ENCODE measurements at regions of chr2 and their contacts with region 1.

Region 1: DNA sequence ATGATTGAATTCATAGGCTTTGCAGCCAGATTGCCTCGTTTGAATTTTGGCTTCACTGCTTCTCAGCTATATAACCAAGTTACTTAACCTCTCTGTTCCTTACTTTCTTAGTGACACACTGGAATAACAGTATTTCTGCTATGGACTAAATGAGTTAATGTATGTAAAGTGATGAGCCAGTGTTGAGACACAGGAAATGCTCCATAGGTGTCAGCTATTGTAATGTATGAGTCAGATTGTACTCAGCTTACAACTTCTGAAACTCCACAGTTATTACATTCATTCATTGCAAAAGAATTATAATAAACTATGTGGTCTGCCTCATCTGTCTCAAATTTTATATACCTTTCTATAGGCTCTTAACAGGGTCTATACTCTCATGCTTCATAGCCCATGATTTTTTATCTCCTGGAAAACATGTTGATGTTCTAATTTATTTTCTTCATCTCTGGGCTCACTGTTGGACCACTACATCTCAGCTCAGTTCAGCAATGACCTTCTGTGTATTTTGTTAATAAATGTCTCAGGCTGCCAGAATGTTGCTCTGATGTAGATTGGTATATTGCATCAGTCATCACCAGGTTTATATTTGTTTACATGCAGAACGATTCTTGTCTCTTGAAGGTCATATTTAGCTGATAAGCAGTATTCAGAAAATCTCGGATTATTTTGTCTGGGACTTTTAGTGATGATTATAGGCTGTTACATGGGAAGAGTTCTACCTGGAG is 76.2 kb downstream of the MAP3K20 start:
- DNase-seq: no peak
- H3K4me3 Mint-ChIP-seq: peak overlapping the region; percentile 53
- H3K27ac Mint-ChIP-seq: peak overlapping the region; percentile 77
- H3K4me1 Mint-ChIP-seq: peaks cover 64% of the 10 kb centered on the region
- H3K27me3 Mint-ChIP-seq: peaks cover 4% of the 10 kb centered on the region

Region 2: GRCh38 chr2:173027181-173028128 is 124.4 kb before region 1 on chr2:
- intact Hi-C with region 1: loop called (anchors 5 kb)
- DNase-seq: peak; percentile 57
- H3K4me3 Mint-ChIP-seq: no peak overlapping the region
- H3K27ac Mint-ChIP-seq: no peak overlapping the region
- H3K4me1 Mint-ChIP-seq: no peaks in the 10 kb centered on the region
- H3K27me3 Mint-ChIP-seq: peaks cover 11% of the 10 kb centered on the region

Region 3: DNA sequence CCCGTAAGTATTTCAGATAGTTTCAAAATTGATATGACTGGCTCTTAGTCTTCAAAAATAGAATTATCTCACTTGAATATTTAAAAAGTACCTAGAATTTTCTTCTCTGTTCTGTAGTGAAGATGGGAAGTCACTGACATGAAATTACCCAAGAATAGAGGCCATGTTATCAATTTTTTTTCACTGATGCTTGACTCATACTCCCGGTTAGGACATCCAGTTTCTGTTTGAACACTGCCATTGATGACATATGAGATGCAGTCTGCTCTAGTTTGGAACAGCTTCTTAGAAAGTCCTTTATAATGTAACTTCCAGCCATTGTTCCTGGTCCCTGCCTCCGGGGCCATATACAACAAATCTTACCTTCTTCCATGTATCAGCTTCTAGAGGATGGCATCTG is 50.1 kb before region 1 on chr2:
- intact Hi-C with region 1: loop called (anchors 1 kb)
- DNase-seq: no peak
- H3K4me3 Mint-ChIP-seq: no peak overlapping the region
- H3K27ac Mint-ChIP-seq: peak overlapping the region; percentile 4
- H3K4me1 Mint-ChIP-seq: peaks cover 31% of the 10 kb centered on the region
- H3K27me3 Mint-ChIP-seq: no peaks in the 10 kb centered on the region

Region 4: DNA sequence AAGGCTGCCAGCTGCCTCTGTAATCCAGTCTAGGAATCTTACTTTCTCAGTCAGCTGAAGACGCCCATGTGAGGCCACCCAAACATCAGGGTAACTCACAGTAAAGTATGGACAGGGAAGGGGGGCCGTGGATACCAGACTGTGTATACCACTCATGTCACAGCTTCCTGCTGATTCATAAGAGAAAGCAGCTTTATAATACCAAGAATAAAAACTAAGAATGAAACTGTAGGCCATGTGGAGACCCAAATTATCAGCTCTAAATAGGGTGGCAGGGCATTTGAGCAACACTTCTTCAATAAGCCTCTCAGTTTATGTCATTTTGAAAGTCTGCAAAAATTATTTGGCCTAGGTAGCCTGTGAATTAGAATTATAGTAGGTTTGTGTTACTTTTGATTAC is 87.8 kb after region 1 on chr2:
- intact Hi-C with region 1: loop called (anchors 2 kb)
- DNase-seq: peak; percentile 6
- H3K4me3 Mint-ChIP-seq: no peak overlapping the region
- H3K27ac Mint-ChIP-seq: no peak overlapping the region
- H3K4me1 Mint-ChIP-seq: peaks cover 11% of the 10 kb centered on the region
- H3K27me3 Mint-ChIP-seq: no peaks in the 10 kb centered on the region

Measured in activated T-helper 1 cell treated with anti-CD3 and anti-CD28 coated beads, Interleukin-12 subunit alpha, Interleukin-12 subunit beta, Interleukin-2, Interleukin-4 antibody, amounts not matched to agents 30 ng/mL and 10 ng/mL and 1 ng/mL, durations not matched to agents 14 hours and 24 hours and 36 hours (primary cell).